ENCODE measurements at regions of chr13 and their contacts with region 1.

Region 1: GRCh38 chr13:30802953-30803478 is 67.7 kb downstream of the ALOX5AP start:
- DNase-seq: peak; percentile 70
- ATAC-seq: peak; percentile 88
- H3K4me3 ChIP-seq: no peak overlapping the region
- H3K27ac ChIP-seq: peak overlapping the region; percentile 10
- H3K4me1 ChIP-seq: peaks cover 24% of the 10 kb centered on the region
- H3K27me3 ChIP-seq: no peaks in the 10 kb centered on the region
- CTCF ChIP-seq: peak; percentile 89
- POLR2A ChIP-seq: no peak
- RAD21 ChIP-seq: peak; percentile 98

Region 2: GRCh38 chr13:30465585-30466357 is 337.2 kb before region 1 on chr13 and contains the start of gene HMGB1:
- CTCF ChIA-PET with region 1: interaction called, 3 read pairs
- POLR2A ChIA-PET with region 1: no interaction called
- dilution Hi-C with region 1: no loop called
- in situ Hi-C with region 1: loop called (anchors 25 kb)
- intact Hi-C with region 1: loop called (anchors 1 kb)
- DNase-seq: peak; percentile 99
- ATAC-seq: peak; percentile 89
- H3K4me3 ChIP-seq: peak within 1 kb of the TSS; percentile 74
- H3K27ac ChIP-seq: peak within 1 kb of the TSS; percentile 87
- H3K4me1 ChIP-seq: peaks cover 3% of the 10 kb centered on the region
- H3K27me3 ChIP-seq: no peaks in the 10 kb centered on the region
- CTCF ChIP-seq: no peak
- POLR2A ChIP-seq: peak; percentile 93
- RAD21 ChIP-seq: no peak
- total RNA-seq, gene HMGB1: 276 and 480 TPM in 2 replicates

Region 3: GRCh38 chr13:30679483-30680330 is 123.3 kb before region 1 on chr13:
- CTCF ChIA-PET with region 1: no interaction called
- POLR2A ChIA-PET with region 1: no interaction called
- dilution Hi-C with region 1: no loop called
- in situ Hi-C with region 1: loop called (anchors 5 kb)
- intact Hi-C with region 1: loop called (anchors 1 kb)
- DNase-seq: peak; percentile 41
- ATAC-seq: peak; percentile 75
- H3K4me3 ChIP-seq: no peak overlapping the region
- H3K27ac ChIP-seq: no peak overlapping the region
- H3K4me1 ChIP-seq: peaks cover 11% of the 10 kb centered on the region
- H3K27me3 ChIP-seq: no peaks in the 10 kb centered on the region
- CTCF ChIP-seq: peak; percentile 65
- POLR2A ChIP-seq: no peak
- RAD21 ChIP-seq: peak; percentile 70

Region 4: DNA sequence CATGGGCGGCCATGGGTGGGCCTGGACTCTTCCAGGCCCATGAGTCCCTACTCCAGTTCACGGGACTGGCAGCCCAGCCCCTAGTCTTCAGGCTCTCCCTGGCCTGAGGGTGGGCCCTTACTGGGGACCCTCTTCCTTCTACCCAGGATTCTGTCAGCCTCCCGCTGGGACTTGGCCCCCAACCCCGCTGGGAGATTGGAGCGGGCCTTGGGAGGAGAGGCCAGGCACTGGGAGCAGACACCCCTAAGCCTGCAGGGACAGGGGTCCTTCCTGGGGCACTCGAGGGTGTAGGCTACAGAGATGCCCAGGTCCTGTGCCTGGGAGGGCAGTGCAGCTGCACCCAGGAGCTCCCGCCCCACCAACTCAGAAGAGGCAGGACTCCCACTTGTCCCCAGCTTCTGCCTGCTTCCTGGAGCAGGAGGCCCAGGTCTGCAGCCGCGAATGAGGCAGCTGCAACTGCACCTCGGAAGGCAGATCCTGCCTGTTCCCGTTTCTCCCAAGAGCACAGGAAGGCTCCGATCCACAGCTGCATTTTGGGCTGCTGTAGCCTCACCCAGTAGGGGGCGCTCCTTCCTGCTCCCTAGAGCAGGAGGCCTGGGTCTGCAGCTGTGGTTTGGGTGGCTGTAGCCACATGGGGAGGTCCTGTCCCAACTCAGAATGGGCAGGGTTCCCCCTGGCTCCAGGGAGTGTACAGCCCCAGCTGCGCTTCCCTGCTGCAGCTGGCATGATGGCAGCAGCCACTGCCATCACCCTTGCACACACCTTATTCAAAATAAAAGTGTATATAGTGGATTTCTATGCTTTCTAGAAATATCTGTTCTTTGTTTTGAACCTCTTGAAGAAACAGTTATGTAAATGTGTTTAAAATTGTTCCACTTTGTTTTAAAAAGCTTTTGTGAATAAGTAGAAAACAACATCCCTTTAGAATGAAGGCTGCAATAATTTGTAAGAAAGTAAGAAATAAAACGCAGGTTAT is 176.3 kb after region 1 on chr13:
- CTCF ChIA-PET with region 1: no interaction called
- POLR2A ChIA-PET with region 1: no interaction called
- dilution Hi-C with region 1: no loop called
- in situ Hi-C with region 1: no loop called
- intact Hi-C with region 1: loop called (anchors 10 kb)
- DNase-seq: no peak
- ATAC-seq: no peak
- H3K4me3 ChIP-seq: no peak overlapping the region
- H3K27ac ChIP-seq: peak overlapping the region; percentile 75
- H3K4me1 ChIP-seq: peaks cover 13% of the 10 kb centered on the region
- H3K27me3 ChIP-seq: no peaks in the 10 kb centered on the region
- CTCF ChIP-seq: peak; percentile 21; the same call in 1 of the 2 replicates
- POLR2A ChIP-seq: no peak
- RAD21 ChIP-seq: no peak

Region 5: GRCh38 chr13:31044377-31045285 is 241.6 kb after region 1 on chr13:
- CTCF ChIA-PET with region 1: no interaction called
- POLR2A ChIA-PET with region 1: no interaction called
- dilution Hi-C with region 1: no loop called
- in situ Hi-C with region 1: no loop called
- intact Hi-C with region 1: loop called (anchors 1 kb)
- DNase-seq: peak; percentile 81
- ATAC-seq: peak; percentile 72
- H3K4me3 ChIP-seq: no peak overlapping the region
- H3K27ac ChIP-seq: peak overlapping the region; percentile 80
- H3K4me1 ChIP-seq: peaks cover 20% of the 10 kb centered on the region
- H3K27me3 ChIP-seq: no peaks in the 10 kb centered on the region
- CTCF ChIP-seq: peak; percentile 97
- POLR2A ChIP-seq: peak; percentile 12; the same call in 1 of the 2 replicates
- RAD21 ChIP-seq: peak; percentile 99

Region 6: DNA sequence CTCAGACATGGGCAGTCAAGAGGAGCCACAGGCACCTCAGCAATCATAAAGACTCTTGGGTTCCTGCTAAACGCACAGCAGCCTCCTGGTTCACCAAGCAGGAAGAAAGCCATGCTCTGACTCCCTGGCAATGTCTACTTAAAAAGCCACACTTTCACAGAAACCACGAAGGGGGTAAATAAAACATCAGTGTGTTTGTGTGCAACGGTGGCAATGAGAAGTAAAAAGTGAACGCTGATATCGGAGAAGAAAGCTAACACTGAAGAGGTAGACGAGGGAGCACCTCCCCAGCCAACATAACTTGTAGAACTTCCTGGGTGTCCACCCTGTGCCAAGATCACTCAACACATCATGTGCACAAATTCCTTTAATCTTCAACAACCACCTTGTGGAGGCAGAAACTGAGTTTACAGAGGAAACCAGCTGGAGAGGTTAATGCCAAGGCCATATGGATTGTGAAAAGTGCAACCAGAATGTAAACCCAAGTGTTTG is 328.5 kb after region 1 on chr13:
- CTCF ChIA-PET with region 1: no interaction called
- POLR2A ChIA-PET with region 1: no interaction called
- dilution Hi-C with region 1: no loop called
- in situ Hi-C with region 1: no loop called
- intact Hi-C with region 1: no loop called
- DNase-seq: no peak
- ATAC-seq: peak; percentile 24; the same call in 1 of the 2 replicates
- H3K4me3 ChIP-seq: no peak overlapping the region
- H3K27ac ChIP-seq: no peak overlapping the region
- H3K4me1 ChIP-seq: peaks cover 2% of the 10 kb centered on the region; the same call in 1 of the 2 replicates
- H3K27me3 ChIP-seq: peaks cover 23% of the 10 kb centered on the region
- CTCF ChIP-seq: no peak
- POLR2A ChIP-seq: no peak
- RAD21 ChIP-seq: no peak